ENCODE measurements at regions of chr2 and their contacts with region 1.

Region 1: GRCh38 chr2:73176881-73177644 is 25.3 kb upstream of the NOTO start:
- DNase-seq: peak; percentile 78
- H3K4me3 Mint-ChIP-seq: peak overlapping the region; percentile 86
- H3K27ac Mint-ChIP-seq: no peak overlapping the region
- H3K4me1 Mint-ChIP-seq: peaks cover 9% of the 10 kb centered on the region
- H3K27me3 Mint-ChIP-seq: peaks cover 48% of the 10 kb centered on the region
- CTCF ChIP-seq: peak; percentile 97

Region 2: DNA sequence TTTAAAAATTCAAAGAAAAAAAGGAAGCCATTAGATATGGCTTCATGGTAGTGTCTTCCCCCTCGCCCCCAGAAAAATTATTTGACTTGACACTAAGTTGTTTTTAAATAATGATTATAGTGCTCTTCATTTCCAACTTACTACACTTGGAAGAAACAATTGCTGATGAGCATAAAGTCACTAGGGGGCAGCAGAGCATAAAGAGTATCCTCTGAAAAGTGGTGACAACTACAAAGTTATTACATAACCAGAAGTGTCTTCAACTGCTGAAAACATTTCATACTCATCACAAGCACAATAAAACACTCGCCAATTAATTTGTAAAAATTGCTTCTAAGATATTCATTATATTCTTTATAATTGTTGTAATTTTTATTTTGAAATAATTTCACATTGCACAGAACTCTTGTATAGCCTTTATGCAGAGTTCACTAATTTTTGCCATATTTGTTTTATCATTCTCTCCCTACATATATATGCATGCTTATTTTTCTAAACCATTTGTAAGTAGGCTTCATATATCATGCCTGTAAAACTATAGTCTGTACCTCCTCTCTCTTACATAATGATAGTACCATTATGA is 406.1 kb before region 1 on chr2:
- CTCF ChIA-PET with region 1: interaction called, 3 read pairs
- POLR2A ChIA-PET with region 1: no interaction called
- intact Hi-C with region 1: loop called (anchors 10 kb)
- DNase-seq: peak; percentile 83
- H3K4me3 Mint-ChIP-seq: no peak overlapping the region
- H3K27ac Mint-ChIP-seq: no peak overlapping the region
- H3K4me1 Mint-ChIP-seq: no peaks in the 10 kb centered on the region
- H3K27me3 Mint-ChIP-seq: no peaks in the 10 kb centered on the region
- CTCF ChIP-seq: peak; percentile 73

Region 3: DNA sequence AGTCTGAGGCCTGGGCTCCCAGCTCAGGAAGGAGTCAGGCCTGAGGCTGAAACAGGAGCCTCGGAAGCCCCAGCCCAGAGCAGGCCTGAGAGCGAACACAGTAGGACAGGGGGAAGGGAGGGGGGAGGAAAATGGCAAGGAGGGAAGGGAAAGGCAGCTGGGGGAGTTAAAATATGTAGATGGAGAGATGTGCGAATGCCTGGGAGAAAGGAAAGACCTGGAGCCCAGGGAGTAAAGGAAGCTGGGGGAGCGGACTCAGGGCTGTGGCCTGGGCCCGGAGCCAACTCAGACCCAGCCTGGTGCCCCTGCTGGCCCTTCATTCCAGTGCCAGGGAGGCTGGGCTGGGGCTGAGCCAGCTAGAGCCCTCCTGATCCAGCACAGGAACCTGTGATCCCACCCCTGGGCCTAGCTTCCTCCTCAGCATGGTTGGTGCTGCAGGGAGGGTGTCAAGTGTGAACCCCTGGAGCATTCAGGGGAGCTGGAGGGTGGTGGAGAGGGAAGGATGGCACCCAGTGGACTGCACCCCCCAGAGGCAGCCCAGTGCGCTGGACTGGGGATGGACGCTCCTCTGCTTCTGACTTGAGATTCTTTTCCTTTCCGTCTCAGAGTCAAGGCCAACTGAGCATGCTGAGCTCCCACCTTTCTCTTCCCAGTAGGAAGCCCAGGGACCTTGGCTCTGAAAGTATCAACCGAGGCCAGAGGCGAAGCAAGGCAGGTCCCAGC is 213.5 kb before region 1 on chr2:
- CTCF ChIA-PET with region 1: no interaction called
- POLR2A ChIA-PET with region 1: no interaction called
- intact Hi-C with region 1: no loop called
- DNase-seq: no peak
- H3K4me3 Mint-ChIP-seq: no peak overlapping the region
- H3K27ac Mint-ChIP-seq: no peak overlapping the region
- H3K4me1 Mint-ChIP-seq: no peaks in the 10 kb centered on the region
- H3K27me3 Mint-ChIP-seq: no peaks in the 10 kb centered on the region
- CTCF ChIP-seq: no peak

Region 4: GRCh38 chr2:73163483-73164367 is 13.3 kb before region 1 on chr2:
- CTCF ChIA-PET with region 1: interaction called, 12 read pairs
- POLR2A ChIA-PET with region 1: no interaction called
- intact Hi-C with region 1: no loop called
- DNase-seq: peak; percentile 72
- H3K4me3 Mint-ChIP-seq: no peak overlapping the region
- H3K27ac Mint-ChIP-seq: no peak overlapping the region
- H3K4me1 Mint-ChIP-seq: no peaks in the 10 kb centered on the region
- H3K27me3 Mint-ChIP-seq: peaks cover under 1% of the 10 kb centered on the region
- CTCF ChIP-seq: peak; percentile 91

Region 5: DNA sequence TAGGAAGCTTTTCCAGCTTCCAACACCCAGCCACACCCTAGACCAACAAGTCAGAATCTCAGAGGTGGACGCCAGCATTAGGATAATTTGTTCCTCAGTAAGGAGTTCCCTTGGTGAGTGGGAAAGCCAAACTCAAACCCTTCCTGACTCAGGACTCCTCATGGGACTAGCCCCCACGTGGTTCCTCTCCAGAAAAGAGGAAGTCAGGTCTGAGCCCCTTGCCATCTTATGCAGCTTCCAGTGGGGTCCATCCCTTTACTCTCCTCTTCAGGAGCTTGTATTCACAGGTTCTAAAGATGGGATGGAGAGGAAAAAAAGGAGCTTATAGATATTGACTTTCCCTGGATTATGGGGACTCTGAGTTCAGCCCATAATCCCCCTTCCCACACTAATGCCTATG is 10.5 kb after region 1 on chr2:
- CTCF ChIA-PET with region 1: interaction called, 25 read pairs
- POLR2A ChIA-PET with region 1: interaction called, 3 read pairs
- intact Hi-C with region 1: no loop called
- DNase-seq: no peak
- H3K4me3 Mint-ChIP-seq: no peak overlapping the region
- H3K27ac Mint-ChIP-seq: no peak overlapping the region
- H3K4me1 Mint-ChIP-seq: no peaks in the 10 kb centered on the region
- H3K27me3 Mint-ChIP-seq: peaks cover 54% of the 10 kb centered on the region
- CTCF ChIP-seq: no peak

Region 6: GRCh38 chr2:73202156-73203054 is 25.3 kb after region 1 on chr2 and contains the start of gene NOTO:
- CTCF ChIA-PET with region 1: interaction called, 18 read pairs
- POLR2A ChIA-PET with region 1: no interaction called
- intact Hi-C with region 1: no loop called
- DNase-seq: no peak
- H3K4me3 Mint-ChIP-seq: no peak within 1 kb of the TSS
- H3K27ac Mint-ChIP-seq: no peak within 1 kb of the TSS
- H3K4me1 Mint-ChIP-seq: no peaks in the 10 kb centered on the region
- H3K27me3 Mint-ChIP-seq: no peaks in the 10 kb centered on the region
- CTCF ChIP-seq: no peak
- total RNA-seq, gene NOTO: not detected in 2 replicates

Region 7: GRCh38 chr2:73260034-73260984 is 83.2 kb after region 1 on chr2:
- CTCF ChIA-PET with region 1: interaction called, 3 read pairs
- POLR2A ChIA-PET with region 1: no interaction called
- intact Hi-C with region 1: loop called (anchors 1 kb)
- DNase-seq: peak; percentile 64
- H3K4me3 Mint-ChIP-seq: no peak overlapping the region
- H3K27ac Mint-ChIP-seq: no peak overlapping the region
- H3K4me1 Mint-ChIP-seq: no peaks in the 10 kb centered on the region
- H3K27me3 Mint-ChIP-seq: no peaks in the 10 kb centered on the region
- CTCF ChIP-seq: peak; percentile 68

Measured in MCF 10A (cell line).